ENCODE measurements at regions of chr20 and their contacts with region 1.

Region 1: GRCh38 chr20:1802385-1803060 is 92.7 kb upstream of the SIRPA start:
- DNase-seq: peak; percentile 65
- ATAC-seq: peak; percentile 71
- H3K4me3 Mint-ChIP-seq: peak overlapping the region; percentile 85
- H3K27ac Mint-ChIP-seq: peak overlapping the region; percentile 76
- H3K4me1 Mint-ChIP-seq: peaks cover 25% of the 10 kb centered on the region
- H3K27me3 Mint-ChIP-seq: no peaks in the 10 kb centered on the region
- CTCF ChIP-seq: peak; percentile 60

Region 2: GRCh38 chr20:1776681-1777475 is 25.6 kb before region 1 on chr20:
- CTCF ChIA-PET with region 1: interaction called, 15 read pairs
- POLR2A ChIA-PET with region 1: interaction called, 7 read pairs
- intact Hi-C with region 1: no loop called
- DNase-seq: peak; percentile 80
- ATAC-seq: peak; percentile 94
- H3K4me3 Mint-ChIP-seq: peak overlapping the region; percentile 83
- H3K27ac Mint-ChIP-seq: peak overlapping the region; percentile 57
- H3K4me1 Mint-ChIP-seq: peaks cover 17% of the 10 kb centered on the region
- H3K27me3 Mint-ChIP-seq: peaks cover 7% of the 10 kb centered on the region
- CTCF ChIP-seq: peak; percentile 22

Region 3: GRCh38 chr20:1851396-1851795 is 48.9 kb after region 1 on chr20:
- CTCF ChIA-PET with region 1: interaction called, 15 read pairs
- POLR2A ChIA-PET with region 1: interaction called, 33 read pairs
- intact Hi-C with region 1: loop called (anchors 1 kb)
- DNase-seq: no peak
- ATAC-seq: no peak
- H3K4me3 Mint-ChIP-seq: peak overlapping the region; percentile 63
- H3K27ac Mint-ChIP-seq: peak overlapping the region; percentile 85
- H3K4me1 Mint-ChIP-seq: peaks cover 66% of the 10 kb centered on the region
- H3K27me3 Mint-ChIP-seq: no peaks in the 10 kb centered on the region
- CTCF ChIP-seq: no peak

Region 4: DNA sequence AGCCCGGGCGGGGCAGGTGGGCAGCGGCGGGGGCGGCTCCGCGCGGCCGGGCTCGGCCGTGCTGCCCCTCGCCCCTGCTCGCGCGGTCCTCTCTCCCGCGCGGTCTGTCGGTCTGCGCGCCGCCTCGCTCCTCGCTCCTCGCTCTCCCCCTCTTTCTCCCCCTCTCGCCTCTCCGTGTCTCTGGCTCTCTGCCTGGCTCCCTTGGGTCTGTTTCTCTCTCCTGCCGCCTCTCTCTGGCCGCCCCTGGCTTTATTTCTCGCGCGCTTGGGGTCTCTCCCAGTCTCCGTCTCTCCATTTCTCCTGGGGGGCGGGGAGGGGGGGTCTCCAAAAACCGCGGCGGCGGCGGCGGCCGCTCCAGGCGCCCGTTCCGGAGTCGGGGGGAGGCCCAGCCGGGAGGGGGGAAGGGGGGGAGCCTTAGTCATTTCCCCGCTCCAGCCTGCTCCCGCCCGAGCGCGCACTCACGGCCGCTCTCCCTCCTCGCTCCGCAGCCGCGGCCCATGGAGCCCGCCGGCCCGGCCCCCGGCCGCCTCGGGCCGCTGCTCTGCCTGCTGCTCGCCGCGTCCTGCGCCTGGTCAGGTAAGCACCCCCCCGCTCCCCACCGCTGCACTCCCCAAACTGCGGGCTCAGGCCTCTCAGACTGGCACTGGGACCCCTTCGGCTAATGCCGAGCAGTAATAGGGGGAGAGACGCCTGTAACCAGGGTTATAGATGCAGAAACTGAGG is 92.6 kb after region 1 on chr20 and contains the start of gene SIRPA:
- CTCF ChIA-PET with region 1: interaction called, 11 read pairs
- POLR2A ChIA-PET with region 1: interaction called, 19 read pairs
- intact Hi-C with region 1: loop called (anchors 1 kb)
- DNase-seq: no peak
- ATAC-seq: peak; percentile 7
- H3K4me3 Mint-ChIP-seq: peak within 1 kb of the TSS; percentile 83
- H3K27ac Mint-ChIP-seq: peak within 1 kb of the TSS; percentile 79
- H3K4me1 Mint-ChIP-seq: peaks cover 56% of the 10 kb centered on the region
- H3K27me3 Mint-ChIP-seq: no peaks in the 10 kb centered on the region
- CTCF ChIP-seq: no peak
- total RNA-seq, gene SIRPA: 10.1 and 10.2 TPM in 2 replicates

Region 5: GRCh38 chr20:1965520-1966351 is 163.2 kb after region 1 on chr20:
- CTCF ChIA-PET with region 1: interaction called, 40 read pairs
- POLR2A ChIA-PET with region 1: interaction called, 10 read pairs
- intact Hi-C with region 1: loop called (anchors 1 kb)
- DNase-seq: peak; percentile 81
- ATAC-seq: peak; percentile 91
- H3K4me3 Mint-ChIP-seq: peak overlapping the region; percentile 77
- H3K27ac Mint-ChIP-seq: peak overlapping the region; percentile 78
- H3K4me1 Mint-ChIP-seq: peaks cover 17% of the 10 kb centered on the region
- H3K27me3 Mint-ChIP-seq: peaks cover 1% of the 10 kb centered on the region
- CTCF ChIP-seq: peak; percentile 68

Region 6: DNA sequence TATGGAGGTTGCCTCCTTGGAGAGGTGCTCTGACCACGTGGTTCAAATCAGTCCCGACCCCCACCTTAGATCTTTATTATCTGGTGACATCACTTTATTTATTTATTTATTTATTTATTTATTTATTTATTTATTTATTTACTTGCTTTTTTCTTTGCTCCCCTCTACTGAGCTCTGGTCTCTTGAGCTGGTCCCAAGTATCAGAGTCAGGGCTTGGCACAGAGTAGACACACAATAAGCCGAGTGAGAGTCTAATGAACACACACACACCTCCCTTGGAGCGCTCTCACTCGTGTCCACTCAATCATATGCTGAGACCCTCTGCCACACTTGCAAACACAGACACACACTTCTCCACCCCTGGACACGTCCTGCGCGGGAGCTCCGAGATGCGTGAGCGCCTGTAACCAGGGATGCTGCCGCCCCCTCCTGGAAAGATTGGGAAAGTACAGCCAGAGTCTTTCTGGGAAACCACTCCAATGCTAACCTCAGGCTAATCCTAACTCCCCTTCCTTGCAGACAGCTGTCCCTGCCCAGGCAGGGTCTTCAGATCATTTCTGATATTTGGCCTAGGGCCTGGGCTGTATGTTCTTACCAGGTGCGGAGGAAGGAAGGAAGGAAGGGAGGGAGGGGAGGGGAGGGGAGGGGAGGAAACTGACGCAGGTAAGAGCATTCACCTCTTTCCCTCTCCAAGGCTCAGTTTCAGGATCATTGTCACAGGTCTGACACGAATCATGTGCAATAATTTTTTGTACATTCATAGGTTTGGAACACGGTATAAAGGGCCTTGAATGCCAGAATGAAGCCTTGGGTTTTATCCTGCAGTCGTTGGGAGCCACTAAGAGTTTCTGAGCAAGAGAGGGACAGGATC is 370.0 kb after region 1 on chr20:
- CTCF ChIA-PET with region 1: interaction called, 66 read pairs
- POLR2A ChIA-PET with region 1: interaction called, 4 read pairs
- intact Hi-C with region 1: no loop called
- DNase-seq: peak; percentile 53
- ATAC-seq: peak; percentile 83
- H3K4me3 Mint-ChIP-seq: no peak overlapping the region
- H3K27ac Mint-ChIP-seq: no peak overlapping the region
- H3K4me1 Mint-ChIP-seq: peaks cover 4% of the 10 kb centered on the region
- H3K27me3 Mint-ChIP-seq: peaks cover 11% of the 10 kb centered on the region
- CTCF ChIP-seq: no peak